ENCODE measurements at regions of chr12 and their contacts with region 1.

Region 1: DNA sequence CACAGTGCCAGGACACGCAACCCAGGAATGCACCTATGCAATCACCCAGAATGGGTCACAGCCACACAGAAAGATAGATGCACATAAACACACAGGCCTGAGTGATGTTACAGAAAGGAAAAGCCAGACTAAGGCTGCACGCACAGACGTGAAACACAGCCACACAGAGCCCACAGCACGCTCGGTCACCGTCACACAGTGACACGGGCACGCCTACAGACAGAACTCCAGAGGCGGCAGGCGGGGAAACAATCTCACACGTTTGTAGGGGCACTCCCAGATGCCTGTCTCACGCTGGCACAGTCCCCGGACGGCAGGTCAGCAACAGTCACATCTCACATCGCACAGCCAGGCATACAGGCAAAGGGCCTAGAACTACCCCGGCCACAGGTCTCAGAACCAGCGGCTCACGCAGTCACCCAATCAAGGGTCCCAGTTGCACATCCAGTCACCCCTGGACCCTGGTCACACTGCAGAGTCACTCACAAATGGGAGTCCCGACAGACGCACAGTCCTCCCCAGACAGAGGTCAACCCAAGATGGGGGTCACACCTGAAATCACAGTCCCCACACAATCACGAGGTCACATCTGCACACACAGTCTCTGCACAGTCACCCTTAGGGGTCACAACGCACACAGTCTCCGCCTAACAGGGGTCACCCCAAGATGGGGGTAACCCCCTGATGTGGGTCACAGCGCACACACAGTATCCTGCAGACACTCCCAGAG is 790 bp downstream of the SSH1 start:
- DNase-seq: peak; percentile 87
- ATAC-seq: peak; percentile 41 to 51

Region 2: GRCh38 chr12:108720757-108721514 is 135.7 kb before region 1 on chr12:
- intact Hi-C with region 1: no loop called
- DNase-seq: no peak
- ATAC-seq: peak in 1 of 2 donors; percentile 65

Region 3: GRCh38 chr12:108803428-108804105 is 53.0 kb before region 1 on chr12:
- intact Hi-C with region 1: loop called in 1 of 2 experiments (anchors 2 kb)
- DNase-seq: peak; percentile 73
- ATAC-seq: peak; percentile 60 to 73